ENCODE measurements at regions of chr2 and their contacts with region 1.

Region 1: GRCh38 chr2:112726497-112727190 is 5.8 kb downstream of the NT5DC4 start:
- DNase-seq: peak; percentile 89 to 94
- H3K4me3 ChIP-seq: no peak overlapping the region
- H3K27ac ChIP-seq: no peak overlapping the region
- H3K4me1 ChIP-seq: no peaks in the 10 kb centered on the region; a peak in 2 of 7 replicates
- H3K27me3 ChIP-seq: no peaks in the 10 kb centered on the region
- CTCF ChIP-seq: peak in 2 of 3 experiments; percentile 98; a peak in 3 of 4 replicates
- EP300 ChIP-seq: no peak
- POLR2A ChIP-seq: no peak
- RAD21 ChIP-seq: peak; percentile 99

Region 2: DNA sequence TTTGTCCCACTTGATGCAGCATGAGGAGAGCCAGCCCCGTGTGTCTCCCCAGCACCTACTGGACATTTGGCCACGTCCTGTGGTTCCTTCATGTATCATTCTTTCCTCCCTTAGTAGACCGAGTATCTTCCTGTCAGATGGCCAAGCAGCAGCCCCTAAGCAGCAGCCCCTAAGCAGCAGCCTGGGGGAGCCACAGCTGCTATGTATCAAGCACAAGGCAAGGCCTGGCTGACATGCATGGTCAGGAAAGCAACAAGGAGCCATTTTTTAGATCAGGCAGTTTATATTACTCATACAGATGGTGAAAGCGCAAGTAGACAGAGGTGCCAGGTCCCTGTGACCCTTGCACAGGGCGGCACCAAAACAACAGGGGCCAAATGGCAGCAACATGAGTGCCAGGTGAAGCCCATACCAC is 120.1 kb before region 1 on chr2:
- CTCF ChIA-PET with region 1: interaction called, 65 read pairs
- POLR2A ChIA-PET with region 1: no interaction called
- DNase-seq: no peak
- H3K4me3 ChIP-seq: no peak overlapping the region
- H3K27ac ChIP-seq: no peak overlapping the region
- H3K4me1 ChIP-seq: no peaks in the 10 kb centered on the region
- H3K27me3 ChIP-seq: no peaks in the 10 kb centered on the region
- CTCF ChIP-seq: no peak
- EP300 ChIP-seq: no peak
- POLR2A ChIP-seq: no peak
- RAD21 ChIP-seq: no peak

Region 3: DNA sequence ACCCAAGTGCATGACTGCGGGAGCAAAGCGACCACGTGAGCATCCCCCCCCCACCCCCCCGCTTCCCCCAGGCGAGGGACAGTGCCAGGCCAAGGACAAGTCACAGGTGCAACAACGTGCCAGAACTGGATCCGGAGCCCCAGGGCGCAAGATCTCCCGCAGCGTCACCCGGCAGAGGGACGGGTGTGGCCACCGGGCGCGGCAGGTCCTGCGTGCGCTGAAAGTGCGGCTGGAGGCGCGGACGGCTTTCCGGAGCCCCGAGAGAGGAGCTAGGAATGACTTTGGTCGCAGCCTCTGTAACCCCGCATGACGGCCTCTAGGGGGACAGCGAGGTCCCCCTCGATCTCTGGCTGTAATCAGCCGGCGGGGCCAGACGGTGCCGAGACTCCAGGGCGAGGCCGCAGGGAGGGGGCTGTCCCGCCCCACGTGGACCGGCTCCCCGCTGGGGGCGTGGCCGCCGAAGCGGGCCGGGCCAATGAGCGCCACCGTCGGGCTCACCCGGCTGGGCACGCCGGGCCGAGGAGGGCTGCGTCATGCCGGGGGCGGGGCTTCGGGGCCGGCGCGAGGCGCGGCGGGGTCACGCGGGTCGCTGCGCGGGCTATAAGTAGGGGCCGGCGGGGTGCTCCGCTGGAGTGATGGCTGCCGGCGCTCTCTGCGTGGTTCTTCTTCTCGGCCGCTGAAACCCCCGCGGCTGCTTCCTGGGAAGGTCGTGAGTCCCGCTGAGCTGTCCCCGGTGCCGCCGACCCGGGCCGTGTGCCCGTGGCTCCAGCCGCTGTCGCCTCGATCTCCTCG is 81.1 kb before region 1 on chr2 and contains the start of gene SLC20A1:
- CTCF ChIA-PET with region 1: interaction called, 15 read pairs
- POLR2A ChIA-PET with region 1: interaction called, 5 read pairs
- DNase-seq: peak; percentile 90 to 98
- H3K4me3 ChIP-seq: peak within 1 kb of the TSS; percentile 80 to 99 (median 93)
- H3K27ac ChIP-seq: peak within 1 kb of the TSS; percentile 98
- H3K4me1 ChIP-seq: peaks cover 3 to 12% (median 7%) of the 10 kb centered on the region in 4 experiments; a peak in 5 of 7 replicates
- H3K27me3 ChIP-seq: peaks cover 0 to 5% (median 0%) of the 10 kb centered on the region in 4 experiments; a peak in 3 of 7 replicates
- CTCF ChIP-seq: peak; percentile 55 to 75 (median 70)
- EP300 ChIP-seq: peak in 1 of 2 experiments; percentile 84; a peak in 1 of 3 replicates
- POLR2A ChIP-seq: peak; percentile 97
- RAD21 ChIP-seq: peak; percentile 35 to 52
- total RNA-seq, gene SLC20A1: 105 and 106 TPM in 2 replicates

Region 4: GRCh38 chr2:112679484-112679883 is 47.2 kb before region 1 on chr2:
- CTCF ChIA-PET with region 1: interaction called, 40 read pairs
- POLR2A ChIA-PET with region 1: no interaction called
- DNase-seq: no peak
- H3K4me3 ChIP-seq: no peak overlapping the region
- H3K27ac ChIP-seq: no peak overlapping the region
- H3K4me1 ChIP-seq: no peaks in the 10 kb centered on the region
- H3K27me3 ChIP-seq: no peaks in the 10 kb centered on the region
- CTCF ChIP-seq: no peak
- EP300 ChIP-seq: no peak
- POLR2A ChIP-seq: no peak
- RAD21 ChIP-seq: no peak

Region 5: GRCh38 chr2:112706170-112706664 is 20.4 kb before region 1 on chr2:
- CTCF ChIA-PET with region 1: interaction called, 29 read pairs
- POLR2A ChIA-PET with region 1: no interaction called
- DNase-seq: no peak
- H3K4me3 ChIP-seq: no peak overlapping the region
- H3K27ac ChIP-seq: no peak overlapping the region
- H3K4me1 ChIP-seq: no peaks in the 10 kb centered on the region
- H3K27me3 ChIP-seq: no peaks in the 10 kb centered on the region
- CTCF ChIP-seq: no peak
- EP300 ChIP-seq: no peak
- POLR2A ChIP-seq: no peak
- RAD21 ChIP-seq: no peak

Region 6: GRCh38 chr2:112749755-112750559 is 23.3 kb after region 1 on chr2:
- CTCF ChIA-PET with region 1: interaction called, 15 read pairs
- POLR2A ChIA-PET with region 1: no interaction called
- DNase-seq: peak in 1 of 2 experiments; percentile 86
- H3K4me3 ChIP-seq: no peak overlapping the region
- H3K27ac ChIP-seq: peak overlapping the region; percentile 21; the same call in 1 of the 2 replicates
- H3K4me1 ChIP-seq: no peaks in the 10 kb centered on the region
- H3K27me3 ChIP-seq: no peaks in the 10 kb centered on the region
- CTCF ChIP-seq: peak; percentile 91 to 95 (median 92)
- EP300 ChIP-seq: no peak
- POLR2A ChIP-seq: no peak
- RAD21 ChIP-seq: peak; percentile 88 to 90

Region 7: GRCh38 chr2:112958428-112959108 is 231.9 kb after region 1 on chr2:
- CTCF ChIA-PET with region 1: interaction called, 14 read pairs
- POLR2A ChIA-PET with region 1: no interaction called
- DNase-seq: peak in 1 of 2 experiments; percentile 49
- H3K4me3 ChIP-seq: no peak overlapping the region
- H3K27ac ChIP-seq: no peak overlapping the region
- H3K4me1 ChIP-seq: no peaks in the 10 kb centered on the region
- H3K27me3 ChIP-seq: no peaks in the 10 kb centered on the region; a peak in 1 of 7 replicates
- CTCF ChIP-seq: peak in 2 of 3 experiments; percentile 75 to 77; a peak in 3 of 4 replicates
- EP300 ChIP-seq: no peak
- POLR2A ChIP-seq: no peak
- RAD21 ChIP-seq: peak; percentile 56 to 72